HepG2 (cell line): ENCODE measurements at regions of chr5 and their contacts with region 1.

Region 1: DNA sequence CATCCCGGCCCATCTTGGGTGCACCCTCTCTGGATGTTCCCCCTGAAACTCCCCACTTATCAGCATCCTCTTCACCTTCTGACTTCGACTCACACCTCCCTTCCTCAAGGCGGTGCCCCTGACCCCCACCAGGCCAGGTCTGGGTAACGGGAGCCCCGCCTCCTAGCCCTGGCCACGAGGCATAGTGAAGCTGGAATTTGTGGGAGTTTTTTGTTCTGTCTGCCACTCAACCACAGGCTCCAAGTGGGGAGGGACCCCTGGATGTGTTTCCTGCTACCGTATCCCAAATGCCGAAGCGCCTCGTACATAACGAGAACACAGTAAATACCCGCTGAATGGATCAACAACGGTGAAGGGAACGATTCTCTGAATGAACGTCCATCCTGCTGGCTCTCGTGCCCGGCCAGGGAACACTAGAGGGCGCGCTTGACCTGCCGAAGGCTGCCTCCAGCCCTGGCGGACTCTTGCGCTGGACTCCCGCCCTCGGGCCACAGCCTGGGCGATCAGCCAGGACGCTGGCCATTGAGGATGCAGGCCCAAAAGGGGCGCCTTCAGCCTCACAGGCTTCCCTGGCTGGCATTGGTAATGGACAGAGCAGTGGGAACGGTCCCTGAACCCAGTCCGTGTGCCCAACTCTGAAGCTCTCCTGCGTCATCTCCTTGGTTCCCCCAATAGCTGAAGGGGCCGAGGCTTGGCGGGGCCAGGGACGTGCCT is 47.3 kb upstream of the PHYKPL start:
- DNase-seq: peak; percentile 59
- ATAC-seq: peak; percentile 95
- H3K4me3 ChIP-seq: no peak overlapping the region
- H3K27ac ChIP-seq: no peak overlapping the region
- H3K4me1 ChIP-seq: peaks cover 19% of the 10 kb centered on the region
- H3K27me3 ChIP-seq: peaks cover 2 to 38% of the 10 kb centered on the region in 2 experiments; a peak in 4 of 5 replicates
- CTCF ChIP-seq: peak; percentile 99
- EP300 ChIP-seq: no peak
- POLR2A ChIP-seq: no peak
- RAD21 ChIP-seq: peak; percentile 97

Region 2: GRCh38 chr5:178496642-178497041 is 216.8 kb after region 1 on chr5:
- CTCF ChIA-PET with region 1: no interaction called
- POLR2A ChIA-PET with region 1: no interaction called
- in situ Hi-C with region 1: no loop called
- intact Hi-C with region 1: no loop called
- DNase-seq: no peak
- ATAC-seq: no peak
- H3K4me3 ChIP-seq: no peak overlapping the region
- H3K27ac ChIP-seq: no peak overlapping the region
- H3K4me1 ChIP-seq: no peaks in the 10 kb centered on the region
- H3K27me3 ChIP-seq: peaks cover 0 to 18% of the 10 kb centered on the region in 2 experiments; a peak in 1 of 5 replicates
- CTCF ChIP-seq: no peak
- EP300 ChIP-seq: no peak
- POLR2A ChIP-seq: no peak
- RAD21 ChIP-seq: no peak

Region 3: GRCh38 chr5:178551059-178551458 is 271.2 kb after region 1 on chr5:
- CTCF ChIA-PET with region 1: interaction called, 27 read pairs
- POLR2A ChIA-PET with region 1: no interaction called
- in situ Hi-C with region 1: loop called (anchors 5 kb)
- intact Hi-C with region 1: no loop called
- DNase-seq: peak; percentile 18
- ATAC-seq: no peak
- H3K4me3 ChIP-seq: no peak overlapping the region
- H3K27ac ChIP-seq: no peak overlapping the region
- H3K4me1 ChIP-seq: no peaks in the 10 kb centered on the region
- H3K27me3 ChIP-seq: peaks cover 0 to 17% of the 10 kb centered on the region in 2 experiments; a peak in 4 of 5 replicates
- CTCF ChIP-seq: peak; percentile 11; the same call in 1 of the 2 replicates
- EP300 ChIP-seq: no peak
- POLR2A ChIP-seq: no peak
- RAD21 ChIP-seq: no peak

Region 4: DNA sequence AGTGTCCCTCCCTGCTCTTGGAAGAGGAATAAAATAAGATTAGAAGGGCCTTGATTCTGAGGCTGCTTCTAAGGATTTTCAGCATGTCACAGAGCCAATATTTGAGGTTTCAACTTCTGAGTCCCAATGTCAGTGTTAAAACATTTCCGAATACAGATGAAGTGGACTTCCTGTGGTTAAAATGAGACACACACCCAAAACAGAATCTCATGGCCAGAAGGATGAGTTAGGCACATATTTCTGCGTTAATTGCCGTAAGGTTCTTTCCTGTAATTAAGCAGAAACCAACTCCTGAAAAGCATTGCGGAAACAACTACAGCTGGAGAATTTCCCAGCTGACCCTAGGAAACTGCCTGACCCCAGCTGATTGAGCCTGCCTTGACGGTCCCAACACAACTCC is 569.4 kb after region 1 on chr5:
- CTCF ChIA-PET with region 1: no interaction called
- POLR2A ChIA-PET with region 1: no interaction called
- in situ Hi-C with region 1: loop called (anchors 10 kb)
- intact Hi-C with region 1: no loop called
- DNase-seq: no peak
- ATAC-seq: no peak
- H3K4me3 ChIP-seq: no peak overlapping the region
- H3K27ac ChIP-seq: no peak overlapping the region
- H3K4me1 ChIP-seq: no peaks in the 10 kb centered on the region
- H3K27me3 ChIP-seq: no peaks in the 10 kb centered on the region
- CTCF ChIP-seq: no peak
- EP300 ChIP-seq: no peak
- POLR2A ChIP-seq: no peak
- RAD21 ChIP-seq: no peak